ENCODE measurements at regions of chr10 and their contacts with region 1.

Region 1: GRCh38 chr10:79195091-79195923 is 126.5 kb downstream of the ZMIZ1 start:
- DNase-seq: peak; percentile 87 to 96 (median 93)
- ATAC-seq: peak; percentile 73 to 77
- H3K4me3 ChIP-seq: no peak overlapping the region
- H3K27ac ChIP-seq: peak overlapping the region; percentile 39
- H3K4me1 ChIP-seq: peaks cover 28% of the 10 kb centered on the region
- H3K27me3 ChIP-seq: no peaks in the 10 kb centered on the region

Region 2: DNA sequence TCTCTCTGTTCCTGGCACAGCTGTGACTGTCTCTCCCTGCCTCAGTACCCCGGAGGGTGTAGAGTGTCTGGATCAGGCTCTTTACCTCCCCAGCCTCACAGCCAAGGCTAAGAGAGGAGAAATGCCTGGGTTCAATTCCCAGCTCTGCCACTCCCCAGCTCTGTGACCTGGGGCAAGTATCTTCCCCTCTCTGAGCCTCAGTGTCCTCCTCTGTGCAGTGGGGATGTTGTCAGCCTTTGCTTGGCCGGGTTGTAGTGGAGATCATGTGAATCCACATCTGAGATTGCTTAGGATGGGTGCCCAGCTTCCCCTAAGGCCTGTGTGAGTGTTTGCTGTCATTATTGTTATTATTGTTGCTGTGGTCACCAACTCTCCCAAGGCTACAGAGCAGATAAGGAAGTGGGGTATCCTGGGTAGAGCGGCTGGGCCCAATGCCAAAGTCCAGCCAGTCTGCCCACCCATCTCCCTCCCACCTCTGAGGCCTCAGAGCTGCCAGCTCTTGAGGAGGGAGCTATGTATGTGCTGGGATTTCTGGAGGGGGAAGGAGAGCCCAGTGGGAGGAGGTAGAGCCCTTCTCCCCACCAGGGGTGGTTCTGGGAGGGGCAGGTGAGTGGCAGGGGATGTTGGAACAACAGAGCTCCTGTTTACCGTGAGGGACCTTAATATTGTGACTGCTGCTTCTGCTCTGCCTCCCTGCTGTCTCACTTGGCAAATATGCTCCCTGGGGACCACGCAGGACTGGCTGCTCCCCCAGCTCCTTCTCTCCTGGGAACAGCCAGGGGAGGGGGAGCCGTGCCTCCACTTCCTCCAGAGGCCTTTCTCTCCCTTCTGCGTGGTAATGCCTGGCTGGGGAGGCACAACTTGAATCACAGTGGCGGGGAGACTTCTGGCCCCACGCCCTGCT is 991.1 kb before region 1 on chr10:
- intact Hi-C with region 1: loop called in 1 of 4 experiments (anchors 10 kb)
- DNase-seq: peak; percentile 72 to 88 (median 86)
- ATAC-seq: peak; percentile 90
- H3K4me3 ChIP-seq: no peak overlapping the region
- H3K27ac ChIP-seq: peak overlapping the region; percentile 53
- H3K4me1 ChIP-seq: peaks cover 7% of the 10 kb centered on the region
- H3K27me3 ChIP-seq: no peaks in the 10 kb centered on the region

Region 3: DNA sequence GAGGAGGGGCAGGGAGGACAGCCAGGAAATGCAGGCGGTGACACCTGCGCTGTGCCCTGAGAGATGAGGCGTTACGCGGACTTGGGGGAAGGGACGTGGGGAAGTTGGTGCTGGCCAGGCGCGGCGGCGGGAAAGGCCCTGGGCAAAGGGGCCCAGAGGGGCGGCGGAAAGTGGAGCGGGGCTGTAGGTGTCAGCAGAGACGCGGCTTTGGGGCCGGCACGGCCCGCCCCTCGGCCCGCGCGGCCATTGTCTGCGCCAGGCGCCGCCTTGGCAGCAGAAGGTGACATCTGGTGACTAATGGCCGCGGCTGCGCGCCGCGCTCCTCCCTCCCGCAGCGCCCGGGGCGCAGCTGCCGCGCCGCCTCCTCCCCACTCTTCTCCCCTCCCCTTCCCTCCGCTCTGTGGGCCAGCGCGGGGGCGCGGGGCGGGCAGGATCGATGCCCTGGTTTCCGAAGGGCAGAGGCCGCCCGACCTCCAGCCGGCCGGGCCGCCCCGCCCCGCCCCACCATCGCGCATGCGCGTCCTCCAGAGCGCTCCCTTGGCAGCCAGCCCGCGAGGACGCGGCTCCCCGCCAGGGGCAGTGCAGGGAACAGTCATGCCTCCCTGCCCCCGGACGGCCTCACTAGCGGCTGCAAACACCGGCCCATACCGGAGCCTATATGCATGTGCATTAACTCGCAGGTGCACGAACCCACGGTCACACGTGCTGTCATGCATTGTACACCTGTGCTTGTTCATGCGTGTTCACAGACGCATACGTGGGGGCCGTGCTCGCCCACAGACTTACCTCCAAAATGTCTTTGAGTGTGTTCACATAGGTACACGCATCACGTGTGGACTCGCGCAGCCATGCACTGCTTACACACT is 892.1 kb before region 1 on chr10:
- intact Hi-C with region 1: loop called in 1 of 4 experiments (anchors 10 kb)
- DNase-seq: peak; percentile 95 to 99 (median 98)
- ATAC-seq: peak; percentile 97 to 99
- H3K4me3 ChIP-seq: peak overlapping the region; percentile 51
- H3K27ac ChIP-seq: peak overlapping the region; percentile 82
- H3K4me1 ChIP-seq: no peaks in the 10 kb centered on the region
- H3K27me3 ChIP-seq: no peaks in the 10 kb centered on the region

Region 4: GRCh38 chr10:79068562-79069324 is 126.6 kb before region 1 on chr10 and contains the start of gene ZMIZ1:
- intact Hi-C with region 1: loop called in 3 of 4 experiments (anchors 5 to 10 kb)
- DNase-seq: peak; percentile 91 to 95 (median 94)
- ATAC-seq: peak; percentile 15 to 22
- H3K4me3 ChIP-seq: peak within 1 kb of the TSS; percentile 77
- H3K27ac ChIP-seq: peak within 1 kb of the TSS; percentile 95
- H3K4me1 ChIP-seq: peaks cover 16% of the 10 kb centered on the region
- H3K27me3 ChIP-seq: no peaks in the 10 kb centered on the region
- total RNA-seq, gene ZMIZ1: 67.4 to 83.1 (median 72.9) TPM

Region 5: GRCh38 chr10:79112881-79113431 is 82.4 kb before region 1 on chr10:
- intact Hi-C with region 1: no loop called
- DNase-seq: peak; percentile 72 to 85 (median 79)
- ATAC-seq: peak; percentile 63 to 78
- H3K4me3 ChIP-seq: no peak overlapping the region
- H3K27ac ChIP-seq: peak overlapping the region; percentile 61
- H3K4me1 ChIP-seq: peaks cover 48% of the 10 kb centered on the region
- H3K27me3 ChIP-seq: no peaks in the 10 kb centered on the region

Region 6: GRCh38 chr10:79404231-79404609 is 208.9 kb after region 1 on chr10:
- intact Hi-C with region 1: no loop called
- DNase-seq: peak; percentile 85 to 89 (median 87)
- ATAC-seq: peak; percentile 61 to 77
- H3K4me3 ChIP-seq: no peak overlapping the region
- H3K27ac ChIP-seq: peak overlapping the region; percentile 87
- H3K4me1 ChIP-seq: peaks cover 67% of the 10 kb centered on the region
- H3K27me3 ChIP-seq: no peaks in the 10 kb centered on the region